ENCODE measurements at regions of chr2 and their contacts with region 1.

Region 1: GRCh38 chr2:164061129-164061746 is 325.4 kb upstream of the FIGN start:
- DNase-seq: peak in 4 of 5 donors; percentile 40 to 61 (median 58)
- H3K4me3 ChIP-seq: no peak overlapping the region
- H3K27ac ChIP-seq: no peak overlapping the region
- H3K4me1 ChIP-seq: no peaks in the 10 kb centered on the region
- H3K27me3 ChIP-seq: no peaks in the 10 kb centered on the region
- CTCF ChIP-seq: peak; percentile 59

Region 2: DNA sequence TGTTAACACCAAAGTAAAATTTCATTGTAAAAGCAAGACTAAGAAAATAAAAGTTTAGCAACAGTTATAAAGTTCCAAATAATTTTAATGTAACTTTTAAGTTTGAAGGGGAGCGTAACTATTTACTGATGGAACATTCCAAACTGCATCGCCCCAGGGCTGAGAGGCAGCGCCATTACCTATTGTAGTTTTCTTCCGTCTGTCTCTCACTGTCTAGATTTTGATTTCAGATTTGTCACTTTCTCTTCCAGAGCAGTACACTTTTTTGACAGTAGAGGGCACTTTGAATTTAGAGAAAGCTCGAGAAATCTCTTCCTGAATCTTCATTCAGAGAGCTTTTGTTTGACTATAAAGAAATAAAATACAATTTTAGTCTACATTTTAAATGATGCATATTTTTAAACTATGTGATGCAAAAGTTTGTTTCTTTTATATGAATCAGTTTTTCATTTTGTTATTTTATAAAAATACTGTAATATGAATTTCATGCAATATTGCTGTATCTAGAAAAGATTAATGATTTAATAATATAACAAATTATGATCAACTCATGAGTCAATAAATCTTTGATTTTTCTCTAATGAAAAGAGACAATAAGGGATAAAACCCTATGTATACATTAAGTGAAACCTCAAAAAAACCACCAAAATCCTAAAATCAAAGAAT is 715.2 kb before region 1 on chr2:
- intact Hi-C with region 1: loop called (anchors 10 kb)
- DNase-seq: peak in 2 of 5 donors; percentile 80 to 84
- H3K4me3 ChIP-seq: no peak overlapping the region
- H3K27ac ChIP-seq: no peak overlapping the region
- H3K4me1 ChIP-seq: peaks cover 0 to 4% (median 4%) of the 10 kb centered on the region in 3 donors
- H3K27me3 ChIP-seq: no peaks in the 10 kb centered on the region
- CTCF ChIP-seq: peak; percentile 58

Measured in kidney (tissue), 22 donors.